Calu3 (cell line): ENCODE measurements at regions of chr3 and their contacts with region 1.

Region 1: DNA sequence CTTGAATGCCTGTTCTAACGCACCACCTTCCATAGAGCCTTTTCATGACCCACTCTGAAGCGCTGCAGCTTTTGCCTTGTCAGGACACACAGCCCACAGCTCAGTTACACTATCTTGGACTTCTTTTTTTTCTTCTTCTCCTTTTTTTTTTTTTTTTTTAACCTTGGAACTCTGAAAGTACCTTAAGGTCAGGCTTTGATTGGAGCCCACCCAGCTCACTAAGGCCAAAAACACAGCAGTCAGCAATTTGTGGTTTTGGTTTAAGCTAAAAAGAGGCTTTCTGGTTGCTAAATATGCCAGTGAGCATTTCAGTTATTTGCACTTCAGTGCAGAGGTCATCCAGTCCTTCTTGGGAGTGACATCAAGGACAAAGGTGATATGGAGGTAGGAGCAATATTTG is 1.7 kb downstream of the SLC25A20 start:
- DNase-seq: no peak
- H3K4me3 Mint-ChIP-seq: peak overlapping the region; percentile 90
- H3K27ac Mint-ChIP-seq: no peak overlapping the region
- H3K4me1 Mint-ChIP-seq: peaks cover 18% of the 10 kb centered on the region
- H3K27me3 Mint-ChIP-seq: no peaks in the 10 kb centered on the region
- CTCF ChIP-seq: no peak

Region 2: DNA sequence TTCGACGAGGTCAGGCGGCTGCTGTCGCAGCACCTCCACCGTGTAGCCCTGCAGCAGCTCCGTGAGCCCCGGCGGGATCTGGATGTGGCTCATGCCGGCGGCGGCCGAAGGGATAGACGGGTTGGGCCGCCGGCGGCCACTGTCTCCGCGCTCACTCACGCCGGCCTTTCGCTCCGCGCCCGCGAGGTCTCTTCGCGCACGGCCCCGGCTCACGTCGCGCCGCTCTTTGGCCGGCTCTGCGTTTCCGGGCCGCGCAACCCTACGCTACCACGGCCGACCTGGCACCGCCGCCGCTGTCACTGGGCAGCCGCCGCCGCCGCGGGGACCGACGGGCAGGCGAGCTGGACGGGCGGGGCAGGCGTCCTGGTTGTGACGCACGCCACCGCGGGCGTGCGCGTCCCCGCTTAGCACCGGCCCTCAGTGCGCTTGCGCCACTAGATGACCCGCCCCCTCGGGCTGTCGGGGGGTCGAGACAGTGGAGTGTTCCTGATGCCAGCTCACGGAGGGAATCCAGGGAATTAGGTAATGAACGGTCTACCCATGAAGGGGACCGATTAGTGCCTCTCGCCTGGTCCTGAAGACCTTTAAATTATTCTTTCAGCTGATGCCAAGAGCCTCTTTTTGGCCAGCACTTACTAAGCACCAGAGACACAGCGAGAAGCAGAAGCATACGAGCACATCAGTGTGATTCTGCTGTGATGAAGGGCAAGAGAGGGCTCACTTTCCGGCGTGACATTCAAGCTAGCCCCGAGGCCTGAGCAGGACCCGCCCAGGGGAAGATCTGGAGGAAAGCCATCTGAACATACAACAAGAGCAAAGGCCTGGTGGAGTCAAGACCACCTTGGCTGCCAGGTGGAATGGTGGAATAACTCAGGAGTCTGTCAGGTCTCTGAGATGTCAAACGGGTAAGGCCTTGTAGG is 49.2 kb before region 1 on chr3 and contains the start of gene PRKAR2A:
- CTCF ChIA-PET with region 1: interaction called, 10 read pairs
- intact Hi-C with region 1: no loop called
- DNase-seq: peak; percentile 92
- H3K4me3 Mint-ChIP-seq: peak within 1 kb of the TSS; percentile 92
- H3K27ac Mint-ChIP-seq: peak within 1 kb of the TSS; percentile 80
- H3K4me1 Mint-ChIP-seq: peaks cover 7% of the 10 kb centered on the region
- H3K27me3 Mint-ChIP-seq: no peaks in the 10 kb centered on the region
- CTCF ChIP-seq: no peak
- total RNA-seq, gene PRKAR2A: 39.0 and 48.0 TPM in 2 replicates